Activated CD4-positive, alpha-beta T cell treated with anti-CD3 and anti-CD28 coated beads, Interleukin-2, amount 10 ng/mL, durations not matched to agents 7 days and 5 days (primary cell): ENCODE measurements at regions of chr19 and their contacts with region 1.

Region 1: GRCh38 chr19:10717356-10718204 is at the start of gene DNM2:
- DNase-seq: peak; percentile 98
- H3K4me3 Mint-ChIP-seq: peak within 1 kb of the TSS; percentile 98
- H3K27ac Mint-ChIP-seq: peak within 1 kb of the TSS; percentile 88
- H3K4me1 Mint-ChIP-seq: peaks cover 43% of the 10 kb centered on the region
- H3K27me3 Mint-ChIP-seq: no peaks in the 10 kb centered on the region
- total RNA-seq, gene DNM2: 268 to 270 TPM

Region 2: DNA sequence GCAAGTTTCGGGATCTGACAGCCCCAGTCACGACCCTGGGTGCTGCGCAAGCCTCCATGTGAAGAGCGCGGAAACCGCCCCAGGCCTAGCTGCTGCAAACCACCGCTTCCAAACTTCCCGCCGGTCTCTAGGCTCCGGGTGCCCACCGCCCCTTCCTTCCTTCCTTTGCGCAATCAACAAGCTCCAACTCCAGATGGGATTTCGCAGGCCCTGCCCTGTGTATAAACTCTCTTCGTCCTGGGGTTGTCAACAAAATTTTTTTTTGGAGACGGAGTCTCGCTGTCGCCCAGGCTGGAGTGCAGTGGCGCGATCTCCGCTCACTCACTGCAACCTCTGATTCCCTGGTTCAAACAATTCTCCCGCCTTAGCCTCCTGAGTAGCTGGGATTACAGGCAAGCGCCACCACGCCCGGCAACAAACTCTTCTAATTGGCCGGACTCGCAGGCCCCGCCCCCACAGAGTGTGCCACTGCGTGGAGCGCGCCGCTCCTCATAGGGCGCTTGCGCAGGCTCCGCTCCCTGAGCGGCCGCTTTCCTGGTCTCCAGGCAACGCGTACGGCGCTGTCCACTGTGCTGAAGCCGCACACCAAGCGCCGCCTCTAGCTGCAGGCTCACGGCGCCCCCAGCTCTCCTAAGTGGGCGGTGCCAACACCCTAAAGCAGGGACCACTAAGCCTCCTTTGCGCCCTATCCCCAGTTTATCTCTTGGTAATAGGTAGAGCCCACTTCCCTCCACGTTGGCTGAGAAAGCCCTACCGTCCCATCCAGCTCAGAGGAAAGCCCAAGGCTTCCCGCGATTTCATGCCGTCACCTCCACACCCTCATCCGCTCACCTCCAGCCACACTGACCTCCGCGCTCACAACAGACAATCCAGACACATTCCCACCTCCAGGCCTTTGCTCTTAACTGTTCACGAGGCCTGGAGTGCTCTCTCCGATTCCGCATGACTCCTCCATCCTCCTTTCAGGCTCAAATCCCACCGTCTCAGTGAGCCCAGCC is 21.9 kb before region 1 on chr19:
- CTCF ChIA-PET with region 1: interaction called, 58 read pairs
- POLR2A ChIA-PET with region 1: no interaction called
- DNase-seq: peak; percentile 94
- H3K4me3 Mint-ChIP-seq: peak overlapping the region; percentile 72
- H3K27ac Mint-ChIP-seq: no peak overlapping the region
- H3K4me1 Mint-ChIP-seq: peaks cover 17% of the 10 kb centered on the region
- H3K27me3 Mint-ChIP-seq: peaks cover 15% of the 10 kb centered on the region

Region 3: GRCh38 chr19:10730923-10731322 is 13.3 kb after region 1 on chr19:
- CTCF ChIA-PET with region 1: interaction called, 14 read pairs
- POLR2A ChIA-PET with region 1: no interaction called
- DNase-seq: no peak
- H3K4me3 Mint-ChIP-seq: no peak overlapping the region
- H3K27ac Mint-ChIP-seq: peak overlapping the region; percentile 91
- H3K4me1 Mint-ChIP-seq: peaks cover 59% of the 10 kb centered on the region
- H3K27me3 Mint-ChIP-seq: no peaks in the 10 kb centered on the region

Region 4: DNA sequence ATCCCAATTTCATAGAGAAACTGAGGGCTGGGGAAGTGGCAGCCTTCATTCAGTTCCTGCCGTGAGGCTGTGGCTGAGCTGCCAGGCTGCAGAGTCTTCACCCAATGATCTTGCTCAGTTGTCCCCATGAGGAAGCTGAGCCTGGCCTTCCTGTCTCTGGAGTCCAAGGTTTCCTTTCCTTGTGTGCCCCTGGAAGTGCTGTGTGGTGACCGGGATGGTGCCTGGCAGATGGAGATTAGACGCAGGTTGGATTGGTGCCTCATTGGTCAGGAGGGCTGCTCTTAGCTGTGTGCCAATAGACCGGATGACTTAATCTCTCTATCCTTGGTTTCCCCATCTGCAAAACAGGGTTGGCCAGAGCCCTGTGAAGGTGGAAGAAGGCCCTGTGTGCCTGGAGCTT is 24.9 kb after region 1 on chr19:
- CTCF ChIA-PET with region 1: no interaction called
- POLR2A ChIA-PET with region 1: no interaction called
- DNase-seq: no peak
- H3K4me3 Mint-ChIP-seq: no peak overlapping the region
- H3K27ac Mint-ChIP-seq: peak overlapping the region; percentile 66
- H3K4me1 Mint-ChIP-seq: peaks cover 46% of the 10 kb centered on the region
- H3K27me3 Mint-ChIP-seq: no peaks in the 10 kb centered on the region

Region 5: DNA sequence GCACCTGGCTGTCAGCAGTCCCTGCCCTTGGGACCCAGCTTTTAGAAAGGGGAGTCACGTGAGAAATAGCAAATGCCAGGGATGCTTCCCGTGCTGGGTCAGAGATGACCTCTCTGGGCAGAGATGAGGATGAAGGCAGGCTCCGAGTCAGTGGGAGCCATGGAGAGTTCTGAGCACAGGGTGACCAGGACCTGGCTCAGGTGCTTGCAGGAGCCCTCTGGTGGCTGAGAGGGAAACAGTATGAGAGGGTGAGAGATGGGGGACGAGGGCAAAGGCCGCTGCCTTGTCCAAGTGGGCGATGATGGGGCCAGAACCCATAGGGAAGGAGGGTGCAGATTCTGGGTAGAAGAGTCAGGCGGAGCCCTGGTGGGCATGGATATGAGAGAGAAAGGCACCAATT is 102.6 kb after region 1 on chr19:
- CTCF ChIA-PET with region 1: interaction called, 22 read pairs
- POLR2A ChIA-PET with region 1: no interaction called
- DNase-seq: no peak
- H3K4me3 Mint-ChIP-seq: no peak overlapping the region
- H3K27ac Mint-ChIP-seq: no peak overlapping the region
- H3K4me1 Mint-ChIP-seq: peaks cover 15% of the 10 kb centered on the region
- H3K27me3 Mint-ChIP-seq: no peaks in the 10 kb centered on the region

Region 6: GRCh38 chr19:10864538-10864899 is 146.9 kb after region 1 on chr19:
- CTCF ChIA-PET with region 1: interaction called, 64 read pairs
- POLR2A ChIA-PET with region 1: interaction called, 6 read pairs
- DNase-seq: peak; percentile 87
- H3K4me3 Mint-ChIP-seq: no peak overlapping the region
- H3K27ac Mint-ChIP-seq: peak overlapping the region; percentile 72
- H3K4me1 Mint-ChIP-seq: peaks cover 35% of the 10 kb centered on the region
- H3K27me3 Mint-ChIP-seq: no peaks in the 10 kb centered on the region